Endothelial cell of umbilical vein (primary cell): ENCODE measurements at regions of chr2 and their contacts with region 1.

Region 1: GRCh38 chr2:166384774-166385173 is 9.0 kb upstream of the SCN9A start:
- DNase-seq: peak; percentile 58
- H3K4me3 ChIP-seq: no peak overlapping the region
- H3K27ac ChIP-seq: no peak overlapping the region
- H3K4me1 ChIP-seq: peaks cover 14% of the 10 kb centered on the region
- H3K27me3 ChIP-seq: peaks cover 6 to 10% of the 10 kb centered on the region in 2 experiments
- CTCF ChIP-seq: peak; percentile 32 to 37
- POLR2A ChIP-seq: no peak

Region 2: DNA sequence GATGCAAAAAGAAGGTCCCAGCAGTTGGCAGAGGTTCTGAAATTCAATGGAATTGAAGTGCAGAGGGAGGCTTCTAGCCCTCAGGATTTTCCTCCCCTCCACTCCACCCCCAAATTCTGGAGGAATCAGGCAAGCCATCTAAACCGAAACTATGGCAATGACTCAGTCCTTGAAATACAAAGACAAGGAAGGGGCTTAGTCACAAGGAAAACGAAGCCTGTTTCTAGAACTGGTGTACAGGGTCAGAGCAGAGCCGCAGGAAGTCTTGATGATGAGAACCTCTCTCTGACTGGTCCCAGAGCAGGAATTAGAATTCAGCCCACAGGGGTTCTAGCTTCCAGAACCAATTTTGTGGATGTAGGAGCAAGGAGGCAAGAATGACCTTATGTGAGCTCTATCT is 145.2 kb before region 1 on chr2:
- CTCF ChIA-PET with region 1: interaction called, 3 read pairs
- POLR2A ChIA-PET with region 1: no interaction called
- dilution Hi-C with region 1: no loop called
- intact Hi-C with region 1: loop called (anchors 1 kb)
- DNase-seq: peak; percentile 92
- H3K4me3 ChIP-seq: no peak overlapping the region
- H3K27ac ChIP-seq: peak overlapping the region; percentile 89
- H3K4me1 ChIP-seq: peaks cover 35% of the 10 kb centered on the region
- H3K27me3 ChIP-seq: no peaks in the 10 kb centered on the region
- CTCF ChIP-seq: no peak
- POLR2A ChIP-seq: peak; percentile 56

Region 3: DNA sequence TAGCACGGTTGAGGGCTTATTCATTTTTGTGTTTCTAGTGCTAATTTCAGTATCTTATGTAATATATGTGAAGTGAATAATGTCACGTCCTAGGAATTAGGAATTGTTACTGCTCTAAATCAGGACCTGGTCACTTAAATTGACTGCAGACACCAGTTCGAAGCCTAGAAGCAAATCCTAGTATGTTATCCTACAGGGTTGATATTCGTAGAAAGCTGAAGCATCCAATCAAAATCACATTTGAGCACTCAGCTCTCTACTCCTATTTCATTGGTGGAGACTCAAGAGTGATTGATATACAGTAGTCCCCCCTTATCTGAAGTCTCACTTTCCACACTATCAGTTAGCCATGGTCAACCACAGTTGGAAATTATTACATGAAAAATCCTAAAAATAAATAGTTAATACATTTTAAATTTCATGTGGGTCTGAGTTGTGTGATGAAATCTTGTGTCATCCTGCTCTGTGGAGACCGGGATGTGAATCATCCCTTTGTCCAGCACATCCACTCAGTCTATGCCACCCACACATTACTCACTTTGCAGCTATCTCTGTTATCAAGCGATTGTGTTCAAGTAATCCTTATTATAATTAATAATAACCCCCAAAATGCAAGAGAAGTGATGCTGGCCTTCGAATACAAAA is 26.2 kb after region 1 on chr2:
- CTCF ChIA-PET with region 1: interaction called, 4 read pairs
- POLR2A ChIA-PET with region 1: no interaction called
- dilution Hi-C with region 1: no loop called
- intact Hi-C with region 1: loop called (anchors 2 kb)
- DNase-seq: peak; percentile 61
- H3K4me3 ChIP-seq: no peak overlapping the region
- H3K27ac ChIP-seq: no peak overlapping the region
- H3K4me1 ChIP-seq: no peaks in the 10 kb centered on the region
- H3K27me3 ChIP-seq: no peaks in the 10 kb centered on the region
- CTCF ChIP-seq: no peak
- POLR2A ChIP-seq: no peak